Activated CD4-positive, alpha-beta memory T cell treated with anti-CD3 and anti-CD28 coated beads, Interleukin-2, amount 10 ng/mL, durations not matched to agents 7 days and 5 days (primary cell): ENCODE measurements at regions of chr5 and their contacts with region 1.

Region 1: DNA sequence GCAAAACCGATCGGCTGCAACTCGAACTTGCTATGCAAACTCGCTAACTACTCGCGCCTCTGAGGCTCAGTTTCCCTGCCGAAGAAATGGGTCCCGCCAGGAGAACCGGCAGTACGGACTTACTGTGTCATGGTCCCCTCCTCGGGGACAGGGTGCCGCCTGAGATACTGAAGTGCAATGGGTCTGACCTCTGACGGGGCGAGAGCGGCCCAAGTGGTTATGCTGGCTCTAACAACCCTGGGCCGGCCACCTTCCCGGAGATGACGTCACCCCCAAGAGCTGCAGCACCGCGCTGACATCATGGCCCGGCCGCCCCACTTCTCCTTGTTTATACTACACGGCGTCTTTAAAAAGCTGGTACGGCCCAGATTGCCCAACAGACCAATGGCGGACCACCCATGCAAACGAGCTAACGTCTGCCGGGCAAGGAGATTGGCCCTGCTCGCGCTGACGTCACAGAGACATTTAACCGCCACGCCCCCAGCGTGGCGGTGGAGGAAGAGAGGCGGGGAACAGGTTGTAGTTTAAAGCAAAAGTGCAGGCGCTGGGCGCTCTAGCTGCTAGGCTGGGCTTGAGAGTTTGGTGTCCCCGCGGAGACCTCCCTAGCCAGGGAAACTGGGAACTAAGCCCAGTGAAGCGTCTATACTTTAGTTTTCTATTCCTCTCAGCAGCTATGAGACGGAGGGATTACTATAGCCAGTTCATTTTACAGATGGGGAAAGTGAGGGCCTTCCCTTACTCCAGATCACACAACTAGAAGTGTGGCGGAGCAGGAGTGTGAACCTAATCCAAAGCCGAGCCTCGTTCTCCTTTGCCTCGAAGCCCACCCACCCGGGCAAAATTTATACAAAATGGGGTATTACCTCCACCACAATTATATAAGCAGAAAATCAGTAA is 654 bp upstream of the RNF44 start:
- DNase-seq: peak; percentile 99
- H3K4me3 Mint-ChIP-seq: peak overlapping the region; percentile 97
- H3K27ac Mint-ChIP-seq: peak overlapping the region; percentile 95
- H3K4me1 Mint-ChIP-seq: peaks cover 69% of the 10 kb centered on the region
- H3K27me3 Mint-ChIP-seq: no peaks in the 10 kb centered on the region

Region 2: GRCh38 chr5:176388444-176389134 is 149.3 kb before region 1 on chr5 and contains the starts of genes HIGD2A and NOP16:
- CTCF ChIA-PET with region 1: interaction called, 4 read pairs
- POLR2A ChIA-PET with region 1: interaction called, 29 read pairs
- DNase-seq: peak; percentile 99
- H3K4me3 Mint-ChIP-seq: peak within 1 kb of the TSS; percentile 95
- H3K27ac Mint-ChIP-seq: peak within 1 kb of the TSS; percentile 99
- H3K4me1 Mint-ChIP-seq: peaks cover 31% of the 10 kb centered on the region
- H3K27me3 Mint-ChIP-seq: no peaks in the 10 kb centered on the region
- total RNA-seq, gene HIGD2A: 142 to 147 TPM
- total RNA-seq, gene NOP16: 24.2 to 24.7 TPM

Region 3: GRCh38 chr5:176481711-176482110 is 56.1 kb before region 1 on chr5:
- CTCF ChIA-PET with region 1: no interaction called
- POLR2A ChIA-PET with region 1: interaction called, 12 read pairs
- DNase-seq: no peak
- H3K4me3 Mint-ChIP-seq: no peak overlapping the region
- H3K27ac Mint-ChIP-seq: peak overlapping the region; percentile 63
- H3K4me1 Mint-ChIP-seq: peaks cover 40% of the 10 kb centered on the region
- H3K27me3 Mint-ChIP-seq: no peaks in the 10 kb centered on the region

Region 4: GRCh38 chr5:176559683-176560082 is 21.8 kb after region 1 on chr5:
- CTCF ChIA-PET with region 1: interaction called, 10 read pairs
- POLR2A ChIA-PET with region 1: interaction called, 46 read pairs
- DNase-seq: no peak
- H3K4me3 Mint-ChIP-seq: no peak overlapping the region
- H3K27ac Mint-ChIP-seq: no peak overlapping the region
- H3K4me1 Mint-ChIP-seq: peaks cover 39% of the 10 kb centered on the region
- H3K27me3 Mint-ChIP-seq: peaks cover 7% of the 10 kb centered on the region